B cell (primary cell): ENCODE measurements at regions of chr4 and their contacts with region 1.

Region 1: GRCh38 chr4:25986807-25987206 is 72.8 kb downstream of the SMIM20 start:
- DNase-seq: no peak
- ATAC-seq: no peak
- H3K4me3 ChIP-seq: no peak overlapping the region
- H3K4me3 Mint-ChIP-seq: no peak overlapping the region
- H3K27ac ChIP-seq: no peak overlapping the region
- H3K27ac Mint-ChIP-seq: no peak overlapping the region
- H3K4me1 ChIP-seq: peaks cover 5 to 21% of the 10 kb centered on the region in 2 donors
- H3K4me1 Mint-ChIP-seq: peaks cover 20% of the 10 kb centered on the region
- H3K27me3 ChIP-seq: peaks cover 0 to 6% (median 0%) of the 10 kb centered on the region in 4 experiments
- H3K27me3 Mint-ChIP-seq: peaks cover 5% of the 10 kb centered on the region
- CTCF ChIP-seq: no peak

Region 2: DNA sequence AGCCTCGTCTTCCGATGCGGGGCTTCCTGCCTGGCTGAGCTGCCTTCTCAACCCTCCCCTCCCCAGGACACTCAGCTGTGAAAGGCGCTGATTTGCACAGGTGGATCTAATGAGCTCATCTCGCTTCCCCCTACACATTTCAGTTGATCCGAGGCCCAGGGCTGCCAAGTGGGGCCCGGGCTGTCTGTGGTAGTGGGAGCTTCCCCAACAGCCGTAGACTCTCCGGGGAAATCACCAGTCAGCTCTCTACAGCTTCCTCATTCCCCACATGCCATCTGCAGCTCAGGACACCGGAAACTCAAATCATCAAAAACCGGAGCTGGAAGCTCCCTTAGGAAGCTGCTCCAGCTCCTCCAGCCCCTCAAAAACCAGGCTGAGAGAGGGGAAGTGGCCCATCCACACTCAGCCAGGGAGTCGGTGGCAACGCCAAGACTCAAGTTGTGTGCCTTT is 16.6 kb before region 1 on chr4:
- CTCF ChIA-PET with region 1: interaction called, 12 read pairs
- POLR2A ChIA-PET with region 1: no interaction called
- intact Hi-C with region 1: no loop called
- DNase-seq: peak; percentile 74
- ATAC-seq: peak; percentile 79
- H3K4me3 ChIP-seq: peak overlapping the region in 1 of 5 experiments; percentile 14
- H3K4me3 Mint-ChIP-seq: peak overlapping the region; percentile 62
- H3K27ac ChIP-seq: no peak overlapping the region
- H3K27ac Mint-ChIP-seq: peak overlapping the region; percentile 12
- H3K4me1 ChIP-seq: peaks cover 26 to 35% of the 10 kb centered on the region in 2 donors
- H3K4me1 Mint-ChIP-seq: peaks cover 34% of the 10 kb centered on the region
- H3K27me3 ChIP-seq: no peaks in the 10 kb centered on the region
- H3K27me3 Mint-ChIP-seq: no peaks in the 10 kb centered on the region
- CTCF ChIP-seq: no peak

Region 3: DNA sequence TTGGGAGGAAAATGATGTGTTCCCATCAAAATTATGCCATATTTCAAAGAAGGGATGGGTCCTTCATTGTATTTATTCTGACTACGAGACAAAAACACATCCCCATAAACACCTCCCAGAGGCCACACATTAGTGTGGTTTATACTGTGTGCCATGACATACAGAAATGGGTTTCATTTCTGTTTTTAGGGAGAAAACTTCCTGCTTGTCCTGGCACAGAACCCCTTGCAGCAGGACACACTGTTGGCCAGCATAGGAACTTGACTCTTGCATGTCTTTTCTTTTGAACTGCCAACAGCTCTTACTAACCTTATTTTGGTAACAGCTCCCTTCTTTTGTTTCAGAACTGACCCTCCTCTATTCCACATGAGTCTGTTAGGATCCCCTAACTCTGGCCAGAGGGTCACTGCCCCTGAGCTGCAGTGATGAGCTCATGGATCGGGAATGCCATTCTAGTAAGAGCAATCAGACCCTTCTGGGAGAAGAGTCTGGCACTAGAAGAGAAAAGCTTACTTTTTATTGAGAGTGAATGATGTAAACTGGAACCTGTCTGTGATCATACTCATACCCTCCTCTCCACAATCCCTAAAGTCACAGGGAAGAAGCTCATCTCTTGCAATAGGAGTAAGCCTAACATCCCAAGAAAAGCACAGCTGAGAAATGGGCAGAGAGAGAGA is 13.6 kb after region 1 on chr4:
- CTCF ChIA-PET with region 1: interaction called, 14 read pairs
- POLR2A ChIA-PET with region 1: no interaction called
- intact Hi-C with region 1: no loop called
- DNase-seq: no peak
- ATAC-seq: no peak
- H3K4me3 ChIP-seq: no peak overlapping the region
- H3K4me3 Mint-ChIP-seq: no peak overlapping the region
- H3K27ac ChIP-seq: no peak overlapping the region
- H3K27ac Mint-ChIP-seq: no peak overlapping the region
- H3K4me1 ChIP-seq: no peaks in the 10 kb centered on the region
- H3K4me1 Mint-ChIP-seq: no peaks in the 10 kb centered on the region
- H3K27me3 ChIP-seq: no peaks in the 10 kb centered on the region
- H3K27me3 Mint-ChIP-seq: no peaks in the 10 kb centered on the region
- CTCF ChIP-seq: no peak

Region 4: DNA sequence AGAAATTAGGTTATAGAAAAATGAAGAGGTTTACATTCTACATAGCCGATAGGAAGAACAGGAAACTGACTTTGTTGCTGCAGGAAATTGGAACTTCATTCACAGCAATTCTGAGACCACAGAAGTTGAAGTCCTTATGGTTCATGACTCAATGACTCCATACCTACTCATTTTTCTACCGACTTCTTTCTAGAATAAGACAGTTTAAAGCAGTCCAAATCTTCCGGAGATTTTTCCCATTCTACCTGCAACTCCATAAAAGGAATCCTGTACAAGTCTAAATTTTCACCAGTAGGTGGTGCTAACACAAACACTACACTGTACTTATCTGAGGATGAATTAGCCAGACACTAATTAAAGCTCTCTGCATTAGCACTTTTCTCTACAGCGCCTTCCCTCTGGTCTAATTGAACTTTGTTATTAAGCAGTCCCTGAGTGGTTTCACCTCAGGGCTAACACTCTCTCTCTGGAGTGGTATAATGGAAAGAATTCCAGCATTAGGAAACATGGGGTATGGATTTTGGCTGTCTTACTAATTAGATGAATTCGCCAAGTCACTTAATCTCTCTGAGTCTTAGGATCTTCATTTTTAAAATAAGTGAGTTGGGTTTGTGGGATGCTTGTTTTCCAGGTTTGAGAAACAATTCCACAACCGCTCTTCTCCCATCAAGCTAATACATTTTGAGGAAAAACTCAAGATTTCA is 95.1 kb after region 1 on chr4:
- CTCF ChIA-PET with region 1: interaction called, 6 read pairs
- POLR2A ChIA-PET with region 1: no interaction called
- intact Hi-C with region 1: loop called (anchors 5 kb)
- DNase-seq: peak; percentile 56
- ATAC-seq: peak; percentile 41
- H3K4me3 ChIP-seq: no peak overlapping the region
- H3K4me3 Mint-ChIP-seq: no peak overlapping the region
- H3K27ac ChIP-seq: no peak overlapping the region
- H3K27ac Mint-ChIP-seq: no peak overlapping the region
- H3K4me1 ChIP-seq: no peaks in the 10 kb centered on the region
- H3K4me1 Mint-ChIP-seq: peaks cover 8% of the 10 kb centered on the region
- H3K27me3 ChIP-seq: peaks cover 0 to 10% (median 0%) of the 10 kb centered on the region in 4 experiments
- H3K27me3 Mint-ChIP-seq: peaks cover 5% of the 10 kb centered on the region
- CTCF ChIP-seq: peak; percentile 78